Heart right ventricle (tissue), 16 donors: ENCODE measurements at regions of chr5 and their contacts with region 1.

Region 1: DNA sequence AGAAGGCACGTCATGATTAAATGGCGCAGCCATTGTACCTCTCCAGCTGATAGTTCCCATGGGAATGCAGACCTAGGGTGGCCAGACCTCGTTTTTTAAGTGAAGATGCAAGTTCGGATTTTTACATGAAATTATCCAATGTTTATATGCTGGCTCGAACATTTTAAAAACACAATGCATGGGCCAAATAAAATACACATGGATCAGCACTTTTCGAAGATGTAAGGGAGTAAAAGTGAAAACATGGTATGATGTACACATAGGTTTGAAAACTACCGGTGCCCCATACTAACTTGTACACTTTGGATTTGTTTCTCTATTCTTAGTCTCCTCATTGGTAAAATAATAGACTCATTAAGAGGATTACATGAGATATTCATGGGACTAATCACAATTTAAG is 412.5 kb upstream of the CCNG1 start:
- DNase-seq: no peak
- ATAC-seq: no peak
- H3K4me3 ChIP-seq: no peak overlapping the region
- H3K27ac ChIP-seq: no peak overlapping the region
- H3K4me1 ChIP-seq: no peaks in the 10 kb centered on the region
- H3K27me3 ChIP-seq: no peaks in the 10 kb centered on the region
- CTCF ChIP-seq: no peak

Region 2: DNA sequence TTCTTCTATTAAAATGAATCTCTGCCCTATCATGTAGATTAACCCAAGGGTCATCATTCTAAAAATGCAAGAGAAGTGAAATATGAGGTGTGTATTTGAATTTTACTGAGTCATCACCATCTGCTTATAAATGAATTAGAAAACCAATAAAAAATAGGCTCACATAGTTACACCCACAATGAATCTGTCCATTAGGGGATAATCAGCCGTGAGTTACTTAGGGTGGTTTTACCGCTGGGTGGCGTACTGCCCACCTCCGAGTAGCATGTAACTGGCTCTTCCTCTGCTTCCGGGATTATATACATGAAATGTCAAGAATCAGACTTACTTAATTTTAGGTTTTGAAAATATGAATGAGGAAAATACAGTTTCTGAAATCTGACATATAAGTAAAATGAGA is 79.5 kb after region 1 on chr5:
- intact Hi-C with region 1: loop called in 1 of 10 experiments (anchors 5 kb)
- DNase-seq: no peak
- ATAC-seq: no peak
- H3K4me3 ChIP-seq: no peak overlapping the region
- H3K27ac ChIP-seq: no peak overlapping the region
- H3K4me1 ChIP-seq: no peaks in the 10 kb centered on the region
- H3K27me3 ChIP-seq: no peaks in the 10 kb centered on the region
- CTCF ChIP-seq: no peak